Thyroid gland (tissue), 4 donors: ENCODE measurements at regions of chr18 and their contacts with region 1.

Region 1: DNA sequence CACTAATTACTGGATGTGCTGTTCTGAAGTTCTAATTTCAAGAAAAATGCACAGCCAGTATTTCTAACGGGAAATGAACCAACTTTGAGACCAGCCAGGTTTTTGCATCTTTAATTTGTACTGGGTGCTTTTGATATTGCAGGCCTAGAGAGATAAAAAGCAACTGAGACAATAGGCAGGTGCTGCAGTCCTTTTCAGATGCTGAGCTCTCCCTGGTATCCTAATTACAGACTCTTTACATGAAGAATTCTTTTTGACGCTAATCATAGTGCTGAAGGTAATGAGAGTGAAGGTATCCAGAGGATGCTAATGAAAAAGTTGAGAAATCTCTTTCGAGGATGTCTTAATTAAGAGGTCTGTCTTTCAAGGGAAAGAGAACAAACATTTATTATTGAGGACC is 85.1 kb downstream of the SERPINB8 start:
- DNase-seq: no peak
- H3K4me3 ChIP-seq: no peak overlapping the region
- H3K27ac ChIP-seq: no peak overlapping the region
- H3K4me1 ChIP-seq: no peaks in the 10 kb centered on the region
- H3K27me3 ChIP-seq: no peaks in the 10 kb centered on the region
- CTCF ChIP-seq: no peak
- POLR2A ChIP-seq: no peak

Region 2: GRCh38 chr18:64119916-64120315 is 64.9 kb after region 1 on chr18:
- intact Hi-C with region 1: loop called (anchors 10 kb)
- DNase-seq: no peak
- H3K4me3 ChIP-seq: no peak overlapping the region
- H3K27ac ChIP-seq: no peak overlapping the region
- H3K4me1 ChIP-seq: no peaks in the 10 kb centered on the region
- H3K27me3 ChIP-seq: no peaks in the 10 kb centered on the region
- CTCF ChIP-seq: no peak
- POLR2A ChIP-seq: no peak